ENCODE measurements at regions of chr10 and their contacts with region 1.

Region 1: DNA sequence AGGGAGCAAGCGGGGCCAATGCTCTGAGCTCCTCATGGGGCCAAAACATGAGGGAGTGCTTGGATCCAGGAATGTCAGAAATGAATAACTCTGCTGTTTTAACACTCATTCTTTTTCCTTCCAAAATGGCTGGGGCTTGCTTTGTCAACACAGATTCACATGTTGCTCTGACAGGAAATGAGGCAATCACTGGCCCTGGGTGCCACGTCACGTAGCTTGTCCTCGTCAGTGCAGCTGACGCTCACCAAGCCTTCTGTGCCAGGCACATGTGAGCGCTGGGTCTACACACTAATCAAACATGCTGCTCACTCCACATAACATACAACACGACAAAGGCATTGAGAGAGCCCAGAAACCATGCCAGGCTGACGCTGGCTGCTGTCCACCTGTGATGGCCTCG is 198.9 kb downstream of the WDR37 start:
- DNase-seq: peak; percentile 58
- ATAC-seq: peak; percentile 64
- H3K4me3 Mint-ChIP-seq: no peak overlapping the region
- H3K27ac Mint-ChIP-seq: peak overlapping the region; percentile 1
- H3K4me1 Mint-ChIP-seq: peaks cover 38% of the 10 kb centered on the region
- H3K27me3 Mint-ChIP-seq: peaks cover 70% of the 10 kb centered on the region
- CTCF ChIP-seq: no peak

Region 2: DNA sequence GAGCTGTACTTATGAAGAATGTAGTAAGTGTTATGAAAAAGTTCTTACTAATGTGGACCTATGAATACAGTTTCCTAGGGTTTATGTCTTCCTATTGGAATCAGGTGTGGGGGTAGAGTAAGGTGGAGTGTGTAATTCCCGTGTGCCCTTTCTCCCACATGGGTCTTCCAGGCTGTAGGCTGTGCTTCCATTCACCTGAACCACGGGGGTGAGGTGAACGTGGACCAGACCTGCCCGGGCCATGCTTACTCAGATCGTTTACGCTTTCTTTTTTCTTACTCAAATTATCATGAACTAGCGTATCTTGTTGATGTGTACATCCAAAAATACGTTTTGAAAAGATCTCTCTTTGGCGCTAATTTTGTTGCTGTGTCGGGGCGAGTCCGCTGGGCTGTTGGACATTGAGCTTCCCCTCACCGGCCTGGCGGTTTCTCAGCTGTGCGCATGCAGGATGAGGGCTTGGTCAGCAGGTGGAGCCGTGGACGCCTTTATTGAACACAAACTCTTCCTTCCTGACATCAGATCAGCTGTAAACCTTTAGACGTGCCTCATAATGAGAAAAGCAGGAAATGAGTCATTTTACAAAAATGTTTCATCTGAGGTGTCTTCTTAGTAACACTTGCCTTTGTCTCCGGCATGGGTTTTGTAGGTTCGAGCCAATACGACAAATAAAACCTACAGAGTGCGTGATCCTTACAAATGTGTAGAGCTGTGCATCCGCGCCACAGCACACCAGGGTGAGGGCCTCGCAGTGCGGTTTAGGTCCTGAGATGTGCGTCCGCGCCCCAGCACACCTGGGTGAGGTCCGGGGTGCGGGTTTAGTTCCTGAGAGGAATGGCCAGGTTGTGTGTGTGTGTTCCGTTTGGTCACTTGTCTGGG is 145.1 kb before region 1 on chr10:
- CTCF ChIA-PET with region 1: no interaction called
- POLR2A ChIA-PET with region 1: no interaction called
- intact Hi-C with region 1: loop called (anchors 10 kb)
- DNase-seq: peak; percentile 90
- ATAC-seq: peak; percentile 98
- H3K4me3 Mint-ChIP-seq: peak overlapping the region; percentile 46
- H3K27ac Mint-ChIP-seq: peak overlapping the region; percentile 90
- H3K4me1 Mint-ChIP-seq: peaks cover 32% of the 10 kb centered on the region
- H3K27me3 Mint-ChIP-seq: no peaks in the 10 kb centered on the region
- CTCF ChIP-seq: peak; percentile 89

Measured in activated CD8-positive, alpha-beta T cell treated with anti-CD3 and anti-CD28 coated beads for 36 hours (primary cell).